ENCODE measurements at regions of chr18 and their contacts with region 1.

Region 1: GRCh38 chr18:23837591-23837990 is 148.3 kb downstream of the LAMA3 start:
- DNase-seq: no peak
- H3K4me3 ChIP-seq: no peak overlapping the region
- H3K27ac ChIP-seq: no peak overlapping the region
- H3K4me1 ChIP-seq: peaks cover 13% of the 10 kb centered on the region
- CTCF ChIP-seq: no peak

Region 2: DNA sequence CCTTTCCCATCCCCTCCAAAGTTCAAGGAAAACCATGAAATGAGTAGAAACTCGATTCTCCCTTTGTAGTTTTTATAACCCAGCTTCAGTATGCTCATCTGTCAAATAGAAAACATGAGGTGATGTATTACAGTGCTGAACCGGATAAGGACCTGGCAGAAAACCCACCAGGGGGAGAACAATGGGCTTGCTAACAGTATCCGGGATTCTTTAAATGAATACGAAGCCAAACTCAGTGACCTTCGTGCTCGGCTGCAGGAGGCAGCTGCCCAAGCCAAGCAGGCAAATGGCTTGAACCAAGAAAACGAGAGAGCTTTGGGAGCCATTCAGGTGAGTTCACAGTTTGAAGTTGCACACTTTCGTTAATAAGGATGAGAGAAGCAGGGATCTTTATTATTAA is 63.4 kb after region 1 on chr18:
- CTCF ChIA-PET with region 1: no interaction called
- POLR2A ChIA-PET with region 1: interaction called, 10 read pairs
- intact Hi-C with region 1: no loop called
- DNase-seq: no peak
- H3K4me3 ChIP-seq: no peak overlapping the region
- H3K27ac ChIP-seq: no peak overlapping the region
- H3K4me1 ChIP-seq: no peaks in the 10 kb centered on the region
- CTCF ChIP-seq: no peak

Measured in OCI-LY7 (cell line).